AG04449 (cell line): ENCODE measurements at regions of chr3 and their contacts with region 1.

Region 1: DNA sequence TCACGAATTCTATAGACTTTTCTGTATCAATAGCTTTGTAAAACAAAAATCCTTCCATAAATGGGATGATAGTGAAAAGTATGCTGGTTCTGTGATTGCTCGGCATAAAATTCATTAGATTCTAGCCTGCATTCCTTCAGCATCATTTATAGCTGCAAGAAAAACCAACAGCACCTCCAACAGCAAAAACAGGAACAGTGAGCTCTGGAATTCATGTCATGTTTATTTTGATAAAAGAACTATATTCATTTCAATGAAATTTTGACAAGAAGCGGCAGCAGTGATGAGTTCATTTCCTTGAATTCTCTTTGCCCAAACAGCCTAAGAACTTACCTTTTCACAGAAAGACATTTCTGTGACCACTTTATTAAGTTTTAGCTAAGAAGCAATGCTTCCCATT is 515.2 kb upstream of the CCDC54 start:
- DNase-seq: peak; percentile 44
- H3K4me3 ChIP-seq: no peak overlapping the region
- CTCF ChIP-seq: peak; percentile 34

Region 2: GRCh38 chr3:106609666-106610301 is 252.3 kb before region 1 on chr3:
- CTCF ChIA-PET with region 1: interaction called, 11 read pairs
- POLR2A ChIA-PET with region 1: interaction called, 6 read pairs
- DNase-seq: peak; percentile 86
- H3K4me3 ChIP-seq: no peak overlapping the region
- CTCF ChIP-seq: peak; percentile 64